Panc1 (cell line): ENCODE measurements at regions of chr16 and their contacts with region 1.

Region 1: GRCh38 chr16:27920391-27920891 is 143.1 kb downstream of the GSG1L start:
- DNase-seq: no peak
- ATAC-seq: peak; percentile 86
- H3K4me3 ChIP-seq: no peak overlapping the region
- H3K27ac ChIP-seq: no peak overlapping the region
- H3K4me1 ChIP-seq: 0 out of 2 replicates have a peak, but pooled peaks cover 3% of the 10 kb centered on the region
- H3K27me3 ChIP-seq: 0 out of 2 replicates have a peak, but pooled peaks cover 11% of the 10 kb centered on the region
- CTCF ChIP-seq: 0 out of 2 replicates have a peak, but pooled peaks have one; percentile 40

Region 2: DNA sequence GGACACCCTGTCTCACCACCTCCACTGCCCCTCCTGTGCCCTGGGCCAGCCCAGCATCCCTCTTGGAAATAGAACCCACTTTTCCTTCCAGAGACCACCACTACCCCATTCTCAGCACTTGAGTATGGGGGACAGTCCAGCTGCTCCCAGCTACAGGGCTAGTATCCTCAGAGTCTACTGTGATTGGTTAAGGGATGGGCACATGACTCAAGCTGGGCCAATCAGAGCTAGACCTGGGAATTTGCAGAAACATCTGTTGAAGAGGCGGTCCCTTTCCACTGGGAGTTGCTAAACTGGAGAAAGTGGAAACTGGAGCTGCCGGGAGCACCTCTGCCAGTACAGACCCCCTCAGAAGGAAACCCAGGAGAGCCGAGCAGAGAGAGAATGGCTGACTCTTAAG is 13.6 kb before region 1 on chr16:
- CTCF ChIA-PET with region 1: no interaction called
- POLR2A ChIA-PET with region 1: interaction called, 11 read pairs
- in situ Hi-C with region 1: no loop called
- intact Hi-C with region 1: no loop called
- DNase-seq: no peak
- ATAC-seq: no peak
- H3K4me3 ChIP-seq: no peak overlapping the region
- H3K27ac ChIP-seq: no peak overlapping the region
- H3K4me1 ChIP-seq: no peaks in the 10 kb centered on the region
- H3K27me3 ChIP-seq: peaks cover 2% of the 10 kb centered on the region; the same call in 1 of the 2 replicates
- CTCF ChIP-seq: no peak